ENCODE measurements at regions of chr17 and their contacts with region 1.

Region 1: GRCh38 chr17:42405963-42406495 is 17.0 kb downstream of the CAVIN1 start:
- DNase-seq: peak; percentile 86
- ATAC-seq: peak; percentile 83
- H3K4me3 Mint-ChIP-seq: no peak overlapping the region
- H3K27ac Mint-ChIP-seq: peak overlapping the region; percentile 15
- H3K4me1 Mint-ChIP-seq: peaks cover 10% of the 10 kb centered on the region
- H3K27me3 Mint-ChIP-seq: peaks cover 7% of the 10 kb centered on the region

Region 2: DNA sequence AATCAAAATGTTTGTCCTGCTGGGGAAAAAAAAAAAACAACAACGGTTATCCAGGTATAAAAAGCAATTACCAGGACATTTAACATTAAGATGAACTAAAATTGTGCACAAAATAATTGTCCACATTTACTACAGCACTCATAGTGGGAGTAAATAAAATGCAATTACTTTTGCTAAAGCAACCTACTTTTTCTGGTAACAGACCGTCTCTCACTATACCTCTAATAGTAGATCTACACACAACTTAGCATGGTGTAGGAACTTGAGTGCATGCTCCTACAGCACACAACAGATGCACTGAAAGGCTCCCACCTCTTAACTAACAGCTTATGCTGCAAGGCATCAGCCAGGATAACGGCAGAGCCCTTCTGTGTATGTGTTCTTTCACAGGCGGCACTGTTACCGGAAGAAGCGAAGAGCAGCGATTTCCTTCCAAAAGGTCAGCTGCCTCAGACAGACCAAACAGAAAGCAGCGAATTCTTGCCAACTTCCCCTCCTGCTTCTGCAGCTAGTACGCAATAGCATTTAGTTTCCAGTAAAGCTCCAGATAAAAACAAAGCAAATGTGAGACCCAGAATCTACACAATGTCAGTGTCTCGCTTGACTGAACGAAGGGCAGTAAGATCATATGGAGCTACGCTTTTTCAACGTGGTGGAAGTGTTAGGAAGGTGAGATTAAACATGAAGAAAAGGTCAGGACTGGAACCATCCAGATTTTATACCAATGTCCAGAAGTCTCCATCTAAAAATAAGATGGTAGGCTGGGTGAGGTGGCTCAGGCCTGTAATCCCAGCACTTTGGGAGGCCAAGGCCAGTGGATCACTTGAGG is 157.5 kb before region 1 on chr17:
- CTCF ChIA-PET with region 1: interaction called, 16 read pairs
- DNase-seq: peak; percentile 89
- ATAC-seq: peak; percentile 89
- H3K4me3 Mint-ChIP-seq: peak overlapping the region; percentile 80
- H3K27ac Mint-ChIP-seq: peak overlapping the region; percentile 96
- H3K4me1 Mint-ChIP-seq: peaks cover 65% of the 10 kb centered on the region
- H3K27me3 Mint-ChIP-seq: no peaks in the 10 kb centered on the region

Region 3: GRCh38 chr17:42340691-42341127 is 65.3 kb before region 1 on chr17:
- CTCF ChIA-PET with region 1: interaction called, 967 read pairs
- DNase-seq: peak; percentile 62
- ATAC-seq: peak; percentile 35
- H3K4me3 Mint-ChIP-seq: peak overlapping the region; percentile 3
- H3K27ac Mint-ChIP-seq: peak overlapping the region; percentile 96
- H3K4me1 Mint-ChIP-seq: peaks cover 65% of the 10 kb centered on the region
- H3K27me3 Mint-ChIP-seq: no peaks in the 10 kb centered on the region

Region 4: GRCh38 chr17:42422958-42423712 is 17.1 kb after region 1 on chr17 and contains the start of gene CAVIN1:
- CTCF ChIA-PET with region 1: interaction called, 15 read pairs
- DNase-seq: no peak
- ATAC-seq: peak; percentile 22
- H3K4me3 Mint-ChIP-seq: peak within 1 kb of the TSS; percentile 79
- H3K27ac Mint-ChIP-seq: no peak within 1 kb of the TSS
- H3K4me1 Mint-ChIP-seq: peaks cover 15% of the 10 kb centered on the region
- H3K27me3 Mint-ChIP-seq: peaks cover 63% of the 10 kb centered on the region
- total RNA-seq, gene CAVIN1: 0.66 to 1.3 TPM

Region 5: DNA sequence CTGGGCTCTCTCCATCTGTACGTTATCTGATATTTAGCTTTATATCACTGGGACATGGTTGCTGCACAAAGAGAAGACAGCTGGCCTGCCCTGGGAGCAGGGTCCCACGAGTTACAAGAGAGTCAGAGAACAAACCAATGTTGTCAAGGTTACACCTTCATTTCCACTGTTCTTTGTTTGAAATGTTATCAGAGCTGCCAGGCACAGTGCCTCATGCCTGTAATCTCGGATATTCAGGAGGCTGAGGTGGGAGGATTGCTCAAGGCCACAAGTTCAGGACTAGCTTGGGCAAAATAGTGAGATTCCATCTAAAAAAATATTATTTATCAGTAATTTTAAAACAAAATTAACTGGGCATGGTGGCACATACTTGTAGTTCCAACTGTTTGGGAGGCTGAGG is 87.3 kb after region 1 on chr17:
- CTCF ChIA-PET with region 1: no interaction called
- DNase-seq: no peak
- ATAC-seq: no peak
- H3K4me3 Mint-ChIP-seq: no peak overlapping the region
- H3K27ac Mint-ChIP-seq: no peak overlapping the region
- H3K4me1 Mint-ChIP-seq: peaks cover 12% of the 10 kb centered on the region
- H3K27me3 Mint-ChIP-seq: peaks cover 9% of the 10 kb centered on the region